HEK293 (cell line): ENCODE measurements at regions of chr1 and their contacts with region 1.

Region 1: DNA sequence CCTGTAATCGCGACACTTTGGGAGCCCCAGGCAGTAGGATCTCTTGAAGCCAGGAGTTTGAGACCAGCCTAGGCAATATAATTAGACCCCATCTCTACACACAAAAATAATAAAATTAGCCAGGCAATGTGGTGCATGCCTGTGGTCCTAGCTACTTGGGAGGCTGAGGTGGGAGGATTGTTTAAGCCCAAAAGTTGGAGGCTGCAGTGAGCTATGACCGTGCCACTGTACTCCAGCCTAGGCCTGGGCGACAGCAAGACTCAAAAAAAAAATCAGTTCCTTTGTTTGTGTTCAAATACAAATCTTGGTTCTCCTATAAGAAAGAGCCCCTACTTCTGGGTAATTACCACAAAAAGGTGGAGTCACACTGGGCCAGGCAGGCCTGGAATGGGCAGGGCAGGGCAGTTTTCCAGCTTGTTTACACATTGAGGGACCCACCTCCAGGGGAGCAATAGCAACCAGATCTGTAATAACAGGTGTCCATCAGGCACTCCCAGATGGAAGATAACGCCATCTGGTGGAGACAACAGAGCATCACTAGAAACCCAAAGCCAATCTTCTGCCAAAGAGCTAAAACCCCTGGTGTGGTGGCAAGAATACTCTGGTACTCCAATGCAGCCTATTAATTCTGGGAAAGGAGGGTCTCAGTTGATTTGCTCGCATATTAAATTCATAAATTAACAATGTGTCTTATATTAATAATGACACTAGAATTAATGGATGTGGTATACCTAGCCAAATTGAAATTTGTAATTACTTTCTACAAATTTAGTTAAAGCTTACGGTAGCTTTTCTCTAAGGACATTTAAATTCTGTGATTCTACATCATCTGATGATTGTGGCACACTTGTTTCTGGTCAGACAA is 13.2 kb downstream of the PPP1R15B start:
- H3K4me3 ChIP-seq: no peak overlapping the region
- H3K27ac ChIP-seq: no peak overlapping the region
- H3K4me1 ChIP-seq: no peaks in the 10 kb centered on the region
- CTCF ChIP-seq: peak; percentile 90

Region 2: DNA sequence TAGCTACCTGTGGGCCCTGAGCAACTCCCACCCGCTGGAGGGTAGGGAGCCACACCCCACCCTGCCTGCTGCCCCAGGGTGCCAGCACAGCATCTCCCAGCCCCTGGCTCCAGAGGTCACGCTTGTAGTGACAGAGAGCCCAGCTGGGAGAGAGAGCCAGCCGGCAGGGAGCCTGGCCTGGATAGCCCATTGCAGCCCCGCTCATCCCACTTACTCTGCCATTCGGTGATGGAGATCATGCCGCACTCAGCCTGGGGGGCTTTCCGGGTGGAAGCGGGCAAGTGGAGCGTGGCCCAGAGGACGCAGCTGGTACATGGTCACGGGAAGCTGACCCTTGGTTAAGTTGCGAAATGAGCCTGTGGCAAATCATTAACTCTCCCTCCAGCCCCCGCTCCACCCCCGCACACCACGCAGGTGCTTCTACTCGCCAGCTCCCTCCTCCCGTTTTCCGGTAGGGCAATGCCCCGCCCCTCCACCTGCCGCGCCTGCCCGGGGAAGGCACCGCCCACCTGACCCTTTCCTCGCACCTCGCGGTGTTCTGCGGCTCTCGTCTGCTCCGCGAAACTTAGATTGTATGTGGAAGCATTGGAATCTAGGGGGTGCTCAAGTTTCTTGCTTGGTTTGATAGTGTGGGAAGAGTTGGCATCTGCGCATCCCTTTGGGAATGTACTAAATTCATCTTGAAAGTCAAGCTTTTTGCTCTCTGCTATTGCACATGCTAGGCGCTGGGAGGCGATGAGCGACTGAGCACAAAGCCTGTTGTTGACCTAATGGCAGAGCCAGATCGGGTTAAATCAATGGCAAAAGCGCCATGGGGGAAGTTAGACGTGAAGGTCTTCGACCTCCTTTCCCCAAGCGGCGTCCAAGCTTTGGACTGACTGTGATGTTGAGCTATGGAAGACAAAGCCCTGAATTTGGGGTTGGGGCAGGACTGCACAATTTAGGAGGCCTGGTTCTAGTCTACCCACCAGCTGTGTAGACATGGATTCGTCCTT is 184.5 kb before region 1 on chr1 and contains the start of gene GOLT1A:
- CTCF ChIA-PET with region 1: interaction called, 16 read pairs
- POLR2A ChIA-PET with region 1: no interaction called
- H3K4me3 ChIP-seq: peak within 1 kb of the TSS; percentile 36
- H3K27ac ChIP-seq: no peak within 1 kb of the TSS
- H3K4me1 ChIP-seq: no peaks in the 10 kb centered on the region
- CTCF ChIP-seq: no peak

Region 3: GRCh38 chr1:204242931-204243330 is 155.5 kb before region 1 on chr1:
- CTCF ChIA-PET with region 1: no interaction called
- POLR2A ChIA-PET with region 1: no interaction called
- H3K4me3 ChIP-seq: no peak overlapping the region
- H3K27ac ChIP-seq: no peak overlapping the region
- H3K4me1 ChIP-seq: no peaks in the 10 kb centered on the region
- CTCF ChIP-seq: no peak

Region 4: DNA sequence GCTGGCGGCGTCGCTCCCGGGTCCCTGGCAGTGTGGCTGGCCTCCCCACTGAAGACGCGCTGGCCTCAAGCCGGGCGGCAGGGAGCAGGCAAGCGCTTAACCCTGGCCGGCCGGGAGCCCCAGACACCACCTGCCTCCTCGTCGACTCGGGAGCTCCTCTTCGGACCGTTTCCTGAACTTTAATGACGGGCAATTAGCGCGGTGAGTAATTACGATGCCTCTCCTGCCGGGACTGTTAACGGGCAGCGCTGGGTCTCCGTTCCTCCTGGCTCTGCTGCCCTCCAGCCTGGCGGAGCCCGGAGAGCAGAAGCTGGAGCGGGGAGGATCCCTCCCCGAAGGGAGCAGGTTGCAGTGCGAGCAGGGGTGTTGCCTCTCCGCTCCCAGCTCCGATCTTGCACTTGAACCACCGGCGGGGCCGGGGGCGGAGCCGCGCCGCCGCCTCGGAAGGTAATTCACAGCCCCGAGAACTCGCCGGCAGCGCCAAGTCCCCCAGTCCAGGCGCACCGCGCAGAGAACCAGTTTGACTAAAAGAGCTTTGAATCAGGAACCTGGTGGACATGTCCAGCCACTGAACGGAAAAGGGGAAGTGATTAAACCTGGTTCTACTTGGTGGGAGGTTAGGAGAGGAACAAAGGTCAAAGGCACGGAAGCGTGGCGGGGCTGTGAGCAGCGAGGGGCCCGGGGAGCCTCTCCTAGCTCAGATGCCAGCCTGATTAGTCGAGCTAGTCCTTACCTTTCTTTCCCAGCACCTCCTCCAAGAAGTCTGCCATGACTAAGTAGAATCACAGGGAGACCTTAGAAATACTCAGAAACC is 20.4 kb before region 1 on chr1:
- CTCF ChIA-PET with region 1: interaction called, 31 read pairs
- POLR2A ChIA-PET with region 1: interaction called, 8 read pairs
- H3K4me3 ChIP-seq: peak overlapping the region; percentile 26
- H3K27ac ChIP-seq: no peak overlapping the region; the same call in 1 of the 2 replicates
- H3K4me1 ChIP-seq: no peaks in the 10 kb centered on the region
- CTCF ChIP-seq: no peak

Region 5: DNA sequence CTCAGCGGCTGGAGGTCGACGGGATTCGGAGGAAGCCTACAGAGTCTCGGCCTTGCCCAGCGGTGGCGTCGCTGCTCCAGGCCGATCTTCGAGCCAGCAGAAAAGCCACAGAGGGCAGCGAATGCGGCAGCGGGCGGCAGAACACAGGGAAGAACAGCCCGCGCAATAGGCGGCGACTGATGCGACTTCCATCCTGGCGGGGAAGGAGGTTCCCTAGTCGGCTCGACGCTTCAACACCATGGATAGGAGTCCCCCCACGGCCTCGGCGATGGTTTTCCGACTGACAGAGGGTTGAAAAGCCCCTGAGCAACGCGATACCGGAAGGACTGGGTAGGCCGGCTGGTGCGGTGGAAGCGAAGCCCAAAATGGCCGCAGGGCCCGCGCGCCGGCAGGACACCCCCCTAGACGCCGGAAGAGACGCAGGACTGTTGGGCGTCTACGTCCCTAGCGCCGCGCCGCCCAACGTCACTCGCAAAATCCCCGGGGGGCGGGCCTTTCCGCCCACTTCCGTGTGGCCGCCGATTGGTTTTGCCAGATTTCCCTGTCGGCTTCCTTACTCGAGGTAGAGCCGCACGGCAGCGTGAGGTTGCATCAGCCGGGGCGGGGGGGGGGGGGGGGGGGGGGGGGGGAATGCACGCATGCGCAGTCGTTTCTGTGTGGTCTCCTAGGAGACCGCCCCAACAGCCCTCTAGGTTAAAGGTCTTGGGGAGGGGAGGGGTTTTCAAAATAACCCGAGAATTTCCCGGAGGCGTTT is 13.2 kb after region 1 on chr1 and contains the start of gene PPP1R15B:
- CTCF ChIA-PET with region 1: interaction called, 64 read pairs
- POLR2A ChIA-PET with region 1: interaction called, 12 read pairs
- H3K4me3 ChIP-seq: peak within 1 kb of the TSS; percentile 62
- H3K27ac ChIP-seq: peak within 1 kb of the TSS; percentile 90
- H3K4me1 ChIP-seq: no peaks in the 10 kb centered on the region; the same call in 1 of the 2 replicates
- CTCF ChIP-seq: no peak

Region 6: DNA sequence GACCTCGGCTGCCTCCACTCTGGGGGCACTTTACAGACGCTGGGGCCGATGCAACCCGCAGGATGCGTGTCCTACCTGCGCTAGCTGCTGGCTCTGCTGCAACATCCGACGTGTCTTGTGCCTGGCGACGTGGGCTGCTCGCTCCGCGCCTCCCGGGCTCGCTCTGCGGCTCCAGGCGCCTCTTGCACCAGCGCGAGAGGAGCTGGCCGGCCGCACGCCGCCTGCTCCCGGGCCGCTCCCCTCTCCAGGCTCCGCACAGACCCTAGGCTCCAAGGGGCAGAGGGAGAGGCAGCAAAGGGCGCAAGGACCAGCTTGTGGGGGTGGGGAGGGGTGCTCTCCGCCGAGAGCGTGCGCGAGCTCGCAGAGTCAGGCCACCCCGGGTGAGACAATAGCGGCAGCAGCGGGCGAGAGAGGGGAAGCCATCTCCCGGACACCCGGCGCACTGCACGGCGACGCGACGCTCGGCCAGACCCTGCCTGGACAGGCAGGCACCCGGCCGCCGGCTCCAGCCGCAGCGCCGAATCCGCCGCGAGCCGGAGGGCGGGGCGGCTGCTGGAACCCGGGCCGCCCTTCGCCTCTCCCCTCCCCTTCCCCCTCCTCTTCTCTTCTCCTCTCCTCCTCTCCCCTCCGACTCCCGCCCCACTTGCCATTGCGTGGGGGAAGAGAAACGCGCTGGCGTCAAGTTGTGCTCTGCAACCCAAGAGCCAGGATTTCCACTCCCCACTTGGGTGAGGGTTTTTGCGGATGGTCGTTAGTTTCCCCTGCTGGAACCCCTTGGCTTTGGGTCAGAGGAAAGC is 96.0 kb after region 1 on chr1 and contains the start of gene PIK3C2B:
- CTCF ChIA-PET with region 1: interaction called, 19 read pairs
- POLR2A ChIA-PET with region 1: interaction called, 3 read pairs
- H3K4me3 ChIP-seq: peak within 1 kb of the TSS; percentile 80
- H3K27ac ChIP-seq: peak within 1 kb of the TSS; percentile 90
- H3K4me1 ChIP-seq: peaks cover 5% of the 10 kb centered on the region
- CTCF ChIP-seq: peak; percentile 80; the same call in 1 of the 2 replicates